ENCODE measurements at regions of chr12 and their contacts with region 1.

Region 1: DNA sequence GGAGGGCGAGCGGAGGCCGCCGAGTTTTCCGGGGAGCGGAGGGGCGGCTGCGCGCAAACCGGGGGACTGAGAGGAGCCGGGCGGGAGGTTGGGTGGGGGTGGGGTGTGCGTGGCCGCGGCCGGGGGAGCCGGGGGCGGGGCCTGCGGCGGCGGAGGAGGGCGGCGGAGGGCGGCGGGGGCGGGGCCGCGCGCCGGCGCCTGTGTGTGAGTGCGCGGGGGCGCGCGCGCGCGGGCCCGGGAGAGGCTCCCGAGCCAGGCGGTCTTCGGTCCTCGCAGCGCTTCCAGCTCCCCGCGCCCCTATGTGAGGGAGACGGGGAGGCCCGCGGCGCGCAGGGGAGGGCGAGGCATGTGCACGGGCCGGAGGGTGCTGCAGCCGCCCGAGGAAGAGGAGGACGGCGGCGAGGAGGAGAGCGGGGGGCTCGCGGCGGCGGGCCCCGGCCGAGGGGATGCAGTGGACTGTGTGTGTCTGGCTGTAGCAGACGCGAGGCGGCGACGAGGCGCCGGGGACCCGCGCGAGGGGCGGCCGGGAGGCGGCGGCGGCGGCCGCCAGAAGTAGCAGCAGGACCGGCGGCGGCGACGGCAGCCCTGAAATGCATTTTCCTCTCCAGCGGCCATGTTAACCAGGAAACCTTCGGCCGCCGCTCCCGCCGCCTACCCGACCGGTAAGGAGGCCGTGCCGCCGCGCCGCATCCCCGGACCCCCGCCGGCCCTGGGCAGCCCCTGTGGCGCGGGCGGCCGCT is at the start of gene DYRK2:
- DNase-seq: peak; percentile 71 to 84 (median 80)
- H3K4me3 ChIP-seq: peak within 1 kb of the TSS; percentile 72 to 96 (median 84)
- H3K27ac ChIP-seq: peak within 1 kb of the TSS in 4 of 5 donors; percentile 85 to 95 (median 92)
- H3K4me1 ChIP-seq: peaks cover 14 to 38% of the 10 kb centered on the region in 2 donors
- H3K27me3 ChIP-seq: no peaks in the 10 kb centered on the region
- CTCF ChIP-seq: peak in 2 of 6 experiments; percentile 15 to 23
- POLR2A ChIP-seq: peak; percentile 65 to 81
- total RNA-seq, gene DYRK2: 8.2 to 22.4 (median 15.2) TPM

Region 2: GRCh38 chr12:67441736-67442346 is 206.8 kb before region 1 on chr12:
- intact Hi-C with region 1: loop called in 1 of 2 experiments (anchors 10 kb)
- DNase-seq: peak; percentile 85 to 96 (median 93)
- H3K4me3 ChIP-seq: peak overlapping the region in 1 of 4 donors; percentile 40
- H3K27ac ChIP-seq: peak overlapping the region in 2 of 5 donors; percentile 2 to 60
- H3K4me1 ChIP-seq: peaks cover 8 to 10% of the 10 kb centered on the region in 2 donors
- H3K27me3 ChIP-seq: no peaks in the 10 kb centered on the region
- CTCF ChIP-seq: peak; percentile 79 to 87 (median 86)
- POLR2A ChIP-seq: no peak

Region 3: DNA sequence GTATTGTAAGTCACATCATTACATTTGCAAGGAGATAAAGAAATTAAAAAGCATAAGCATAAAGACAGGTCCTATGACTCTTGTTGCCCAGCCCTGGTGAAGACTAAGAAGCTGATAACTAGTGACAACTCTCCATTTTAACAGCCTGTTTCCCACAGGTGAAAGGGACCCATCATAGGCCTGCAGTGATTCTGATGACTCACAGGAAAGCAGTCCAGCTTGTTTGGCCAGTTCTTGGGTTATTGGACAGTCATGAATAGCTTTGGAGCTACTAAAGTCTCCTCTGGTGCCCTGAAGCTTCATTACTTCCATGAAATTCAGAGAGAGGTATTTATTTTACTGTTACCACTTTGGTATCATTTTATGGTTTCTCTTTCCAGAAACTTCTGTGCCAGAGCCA is 55.6 kb before region 1 on chr12:
- intact Hi-C with region 1: no loop called
- DNase-seq: no peak
- H3K4me3 ChIP-seq: no peak overlapping the region
- H3K27ac ChIP-seq: no peak overlapping the region
- H3K4me1 ChIP-seq: peaks cover 0 to 8% of the 10 kb centered on the region in 2 donors
- H3K27me3 ChIP-seq: no peaks in the 10 kb centered on the region
- CTCF ChIP-seq: no peak
- POLR2A ChIP-seq: no peak

Region 4: GRCh38 chr12:67681105-67681778 is 32.6 kb after region 1 on chr12:
- intact Hi-C with region 1: no loop called
- DNase-seq: peak in 6 of 7 donors; percentile 30 to 66 (median 54)
- H3K4me3 ChIP-seq: no peak overlapping the region
- H3K27ac ChIP-seq: peak overlapping the region in 3 of 5 donors; percentile 24 to 54 (median 51)
- H3K4me1 ChIP-seq: peaks cover 14 to 15% of the 10 kb centered on the region in 2 donors
- H3K27me3 ChIP-seq: no peaks in the 10 kb centered on the region
- CTCF ChIP-seq: no peak
- POLR2A ChIP-seq: no peak

Measured in adrenal gland (tissue), 19 donors.